ENCODE measurements at regions of chr13 and their contacts with region 1.

Region 1: GRCh38 chr13:74287724-74288169 is 153.5 kb upstream of the KLF12 start:
- DNase-seq: peak; percentile 77 to 96 (median 90)
- H3K4me3 ChIP-seq: peak overlapping the region; percentile 36
- H3K4me3 Mint-ChIP-seq: peak overlapping the region; percentile 62 to 79 (median 74)
- H3K27ac ChIP-seq: peak overlapping the region; percentile 41
- H3K27ac Mint-ChIP-seq: peak overlapping the region; percentile 36 to 98 (median 90)
- H3K4me1 ChIP-seq: peaks cover 48% of the 10 kb centered on the region
- H3K4me1 Mint-ChIP-seq: peaks cover 40 to 77% (median 59%) of the 10 kb centered on the region in 3 donors
- H3K27me3 ChIP-seq: no peaks in the 10 kb centered on the region
- H3K27me3 Mint-ChIP-seq: peaks cover 0 to 2% of the 10 kb centered on the region in 2 donors

Region 2: GRCh38 chr13:73451221-73452029 is 836.3 kb before region 1 on chr13:
- CTCF ChIA-PET with region 1: no interaction called
- POLR2A ChIA-PET with region 1: no interaction called
- DNase-seq: no peak
- H3K4me3 ChIP-seq: no peak overlapping the region
- H3K4me3 Mint-ChIP-seq: no peak overlapping the region
- H3K27ac ChIP-seq: no peak overlapping the region
- H3K27ac Mint-ChIP-seq: no peak overlapping the region
- H3K4me1 ChIP-seq: no peaks in the 10 kb centered on the region
- H3K4me1 Mint-ChIP-seq: no peaks in the 10 kb centered on the region
- H3K27me3 ChIP-seq: no peaks in the 10 kb centered on the region
- H3K27me3 Mint-ChIP-seq: peaks cover 0 to 1% of the 10 kb centered on the region in 2 donors

Region 3: GRCh38 chr13:73544175-73544574 is 743.6 kb before region 1 on chr13:
- CTCF ChIA-PET with region 1: no interaction called
- POLR2A ChIA-PET with region 1: no interaction called
- DNase-seq: no peak
- H3K4me3 ChIP-seq: no peak overlapping the region
- H3K4me3 Mint-ChIP-seq: no peak overlapping the region
- H3K27ac ChIP-seq: no peak overlapping the region
- H3K27ac Mint-ChIP-seq: no peak overlapping the region
- H3K4me1 ChIP-seq: no peaks in the 10 kb centered on the region
- H3K4me1 Mint-ChIP-seq: no peaks in the 10 kb centered on the region
- H3K27me3 ChIP-seq: no peaks in the 10 kb centered on the region
- H3K27me3 Mint-ChIP-seq: peaks cover 2 to 11% of the 10 kb centered on the region in 2 donors

Region 4: DNA sequence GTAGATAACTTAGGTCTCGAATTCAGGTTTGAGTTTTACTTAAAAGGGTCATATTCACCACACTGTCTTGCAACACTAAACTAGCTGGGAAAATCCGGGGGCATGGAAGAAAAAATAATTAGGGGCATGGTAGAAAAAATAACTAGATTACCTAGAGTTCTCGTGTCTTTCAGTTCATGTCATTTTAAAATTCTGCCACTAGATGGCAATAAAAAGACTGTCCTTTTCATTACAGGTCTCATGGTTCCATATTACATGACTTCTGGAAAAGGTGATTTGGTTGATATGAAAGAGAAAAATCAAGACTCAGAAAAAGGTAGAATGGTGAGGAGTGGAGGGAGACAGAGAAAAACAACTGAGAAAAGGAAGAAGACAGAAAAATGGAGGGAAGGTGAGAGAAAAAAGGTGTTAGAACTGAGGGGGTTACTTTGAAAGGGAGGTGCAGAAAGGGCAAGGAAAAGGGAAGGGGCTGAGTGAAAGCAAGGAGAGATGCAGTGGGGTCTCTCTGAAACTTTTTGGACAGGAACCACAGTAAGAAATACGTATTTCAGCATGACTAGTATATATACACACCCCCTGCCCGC is 452.5 kb before region 1 on chr13:
- CTCF ChIA-PET with region 1: interaction called, 20 read pairs
- POLR2A ChIA-PET with region 1: no interaction called
- DNase-seq: peak in 2 of 5 donors; percentile 35 to 45
- H3K4me3 ChIP-seq: no peak overlapping the region
- H3K4me3 Mint-ChIP-seq: no peak overlapping the region
- H3K27ac ChIP-seq: no peak overlapping the region
- H3K27ac Mint-ChIP-seq: no peak overlapping the region
- H3K4me1 ChIP-seq: peaks cover 46% of the 10 kb centered on the region
- H3K4me1 Mint-ChIP-seq: peaks cover 47 to 65% (median 61%) of the 10 kb centered on the region in 3 donors
- H3K27me3 ChIP-seq: no peaks in the 10 kb centered on the region
- H3K27me3 Mint-ChIP-seq: no peaks in the 10 kb centered on the region

Region 5: GRCh38 chr13:74026753-74027152 is 261.0 kb before region 1 on chr13:
- CTCF ChIA-PET with region 1: interaction called, 12 read pairs
- POLR2A ChIA-PET with region 1: interaction called, 3 read pairs
- DNase-seq: peak; percentile 53 to 81 (median 69)
- H3K4me3 ChIP-seq: peak overlapping the region; percentile 32
- H3K4me3 Mint-ChIP-seq: peak overlapping the region; percentile 73 to 92 (median 85)
- H3K27ac ChIP-seq: no peak overlapping the region
- H3K27ac Mint-ChIP-seq: peak overlapping the region; percentile 81 to 97 (median 90)
- H3K4me1 ChIP-seq: peaks cover 65% of the 10 kb centered on the region
- H3K4me1 Mint-ChIP-seq: peaks cover 83 to 97% (median 96%) of the 10 kb centered on the region in 3 donors
- H3K27me3 ChIP-seq: no peaks in the 10 kb centered on the region
- H3K27me3 Mint-ChIP-seq: no peaks in the 10 kb centered on the region

Region 6: DNA sequence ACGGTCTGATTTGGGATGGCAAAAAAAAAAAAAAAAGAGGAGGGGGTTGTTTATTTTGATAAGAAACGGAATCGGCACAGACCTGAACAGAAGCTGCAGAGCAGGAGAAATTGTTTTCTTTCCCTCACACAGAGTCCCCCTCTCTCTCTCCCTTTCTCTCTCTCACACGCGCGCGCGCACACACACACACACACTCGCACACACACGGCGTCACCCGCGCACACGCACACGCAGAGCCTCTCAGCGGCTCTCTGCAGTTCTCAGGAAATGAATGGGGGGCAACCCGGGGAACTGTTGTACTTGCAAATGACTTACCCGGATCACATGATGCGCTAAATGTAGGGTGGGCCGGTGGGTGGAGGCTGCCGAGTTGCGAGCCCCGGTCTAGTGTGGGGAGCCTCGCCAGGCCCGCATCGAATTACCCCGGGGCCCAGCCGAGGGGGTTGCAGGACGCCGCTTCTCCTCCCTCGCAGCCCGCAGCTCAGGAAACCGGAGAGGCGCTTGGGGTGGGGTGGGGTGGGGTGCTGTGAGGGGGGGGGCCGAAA is 154.0 kb before region 1 on chr13:
- CTCF ChIA-PET with region 1: interaction called, 79 read pairs
- POLR2A ChIA-PET with region 1: interaction called, 79 read pairs
- DNase-seq: peak; percentile 85 to 98 (median 96)
- H3K4me3 ChIP-seq: peak overlapping the region; percentile 89
- H3K4me3 Mint-ChIP-seq: peak overlapping the region; percentile 95 to 100 (median 97)
- H3K27ac ChIP-seq: peak overlapping the region; percentile 91
- H3K27ac Mint-ChIP-seq: peak overlapping the region; percentile 96 to 100 (median 98)
- H3K4me1 ChIP-seq: peaks cover 32% of the 10 kb centered on the region
- H3K4me1 Mint-ChIP-seq: peaks cover 37 to 40% (median 38%) of the 10 kb centered on the region in 3 donors
- H3K27me3 ChIP-seq: no peaks in the 10 kb centered on the region
- H3K27me3 Mint-ChIP-seq: peaks cover 0 to 6% of the 10 kb centered on the region in 2 donors

Region 7: GRCh38 chr13:74246487-74246886 is 41.3 kb before region 1 on chr13:
- CTCF ChIA-PET with region 1: interaction called, 25 read pairs
- POLR2A ChIA-PET with region 1: interaction called, 8 read pairs
- DNase-seq: peak in 2 of 5 donors; percentile 31 to 55
- H3K4me3 ChIP-seq: no peak overlapping the region
- H3K4me3 Mint-ChIP-seq: peak overlapping the region; percentile 29 to 82 (median 75)
- H3K27ac ChIP-seq: no peak overlapping the region
- H3K27ac Mint-ChIP-seq: peak overlapping the region; percentile 84 to 98 (median 94)
- H3K4me1 ChIP-seq: peaks cover 89% of the 10 kb centered on the region
- H3K4me1 Mint-ChIP-seq: peaks cover 93 to 98% (median 98%) of the 10 kb centered on the region in 3 donors
- H3K27me3 ChIP-seq: no peaks in the 10 kb centered on the region
- H3K27me3 Mint-ChIP-seq: no peaks in the 10 kb centered on the region

Region 8: GRCh38 chr13:74316547-74316946 is 28.8 kb after region 1 on chr13:
- CTCF ChIA-PET with region 1: interaction called, 12 read pairs
- POLR2A ChIA-PET with region 1: no interaction called
- DNase-seq: no peak
- H3K4me3 ChIP-seq: no peak overlapping the region
- H3K4me3 Mint-ChIP-seq: no peak overlapping the region
- H3K27ac ChIP-seq: no peak overlapping the region
- H3K27ac Mint-ChIP-seq: peak overlapping the region in 3 of 8 donors; percentile 7 to 56 (median 13)
- H3K4me1 ChIP-seq: no peaks in the 10 kb centered on the region
- H3K4me1 Mint-ChIP-seq: peaks cover 7 to 28% (median 12%) of the 10 kb centered on the region in 3 donors
- H3K27me3 ChIP-seq: no peaks in the 10 kb centered on the region
- H3K27me3 Mint-ChIP-seq: no peaks in the 10 kb centered on the region

Region 9: DNA sequence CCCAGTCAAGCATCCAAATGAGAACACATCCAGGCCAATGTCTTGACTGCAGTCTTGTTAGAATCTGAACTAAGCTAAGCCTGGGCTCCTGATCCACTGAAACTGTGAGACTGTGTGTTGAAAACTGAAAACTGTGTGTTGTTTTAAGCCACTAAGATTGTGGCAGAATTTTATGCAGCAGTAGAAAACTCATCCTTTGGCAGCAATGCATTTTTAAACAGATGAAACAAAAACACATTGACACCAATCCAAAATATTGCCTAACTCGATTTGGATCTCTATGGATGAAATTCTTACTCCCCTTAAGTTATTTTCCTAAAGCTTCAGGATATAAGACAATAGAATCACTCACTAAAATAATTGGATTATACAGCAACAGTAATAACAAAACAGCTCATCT is 48.8 kb after region 1 on chr13:
- CTCF ChIA-PET with region 1: no interaction called
- POLR2A ChIA-PET with region 1: no interaction called
- DNase-seq: no peak
- H3K4me3 ChIP-seq: no peak overlapping the region
- H3K4me3 Mint-ChIP-seq: no peak overlapping the region
- H3K27ac ChIP-seq: no peak overlapping the region
- H3K27ac Mint-ChIP-seq: no peak overlapping the region
- H3K4me1 ChIP-seq: no peaks in the 10 kb centered on the region
- H3K4me1 Mint-ChIP-seq: peaks cover 0 to 6% (median 4%) of the 10 kb centered on the region in 3 donors
- H3K27me3 ChIP-seq: no peaks in the 10 kb centered on the region
- H3K27me3 Mint-ChIP-seq: no peaks in the 10 kb centered on the region

Region 10: DNA sequence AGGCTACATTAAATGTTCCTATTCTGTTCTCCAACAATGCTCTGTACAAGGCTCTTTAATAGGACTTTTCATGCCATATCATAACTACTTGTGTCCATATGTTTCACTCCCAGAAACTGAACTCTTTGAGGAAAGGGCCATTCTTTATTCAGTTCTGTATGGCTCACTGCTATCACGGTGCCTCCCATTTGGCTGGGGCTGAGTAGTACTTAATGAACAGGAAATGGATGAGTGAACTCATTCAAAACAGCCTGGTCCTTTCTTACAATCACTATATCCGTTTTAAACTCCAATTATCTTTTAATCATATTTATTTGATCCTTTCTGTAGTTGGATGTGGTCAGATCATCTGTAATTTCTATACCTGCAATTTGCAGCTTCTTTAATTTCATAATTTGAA is 783.6 kb after region 1 on chr13:
- CTCF ChIA-PET with region 1: no interaction called
- POLR2A ChIA-PET with region 1: no interaction called
- DNase-seq: no peak
- H3K4me3 ChIP-seq: no peak overlapping the region
- H3K4me3 Mint-ChIP-seq: no peak overlapping the region
- H3K27ac ChIP-seq: no peak overlapping the region
- H3K27ac Mint-ChIP-seq: no peak overlapping the region
- H3K4me1 ChIP-seq: no peaks in the 10 kb centered on the region
- H3K4me1 Mint-ChIP-seq: no peaks in the 10 kb centered on the region
- H3K27me3 ChIP-seq: no peaks in the 10 kb centered on the region
- H3K27me3 Mint-ChIP-seq: peaks cover 2 to 8% of the 10 kb centered on the region in 2 donors

Measured in CD8-positive, alpha-beta memory T cell (primary cell).